ENCODE measurements at regions of chr2 and their contacts with region 1.

Region 1: GRCh38 chr2:157302492-157303099 is 23.0 kb downstream of the ERMN start:
- DNase-seq: peak; percentile 53
- ATAC-seq: peak; percentile 78
- H3K4me3 Mint-ChIP-seq: no peak overlapping the region
- H3K27ac Mint-ChIP-seq: no peak overlapping the region
- H3K4me1 Mint-ChIP-seq: peaks cover 23% of the 10 kb centered on the region
- H3K27me3 Mint-ChIP-seq: peaks cover 20% of the 10 kb centered on the region

Region 2: GRCh38 chr2:157433394-157433793 is 130.8 kb after region 1 on chr2:
- CTCF ChIA-PET with region 1: interaction called, 32 read pairs
- POLR2A ChIA-PET with region 1: interaction called, 3 read pairs
- DNase-seq: no peak
- ATAC-seq: peak; percentile 15
- H3K4me3 Mint-ChIP-seq: peak overlapping the region; percentile 94
- H3K27ac Mint-ChIP-seq: peak overlapping the region; percentile 86
- H3K4me1 Mint-ChIP-seq: peaks cover 77% of the 10 kb centered on the region
- H3K27me3 Mint-ChIP-seq: no peaks in the 10 kb centered on the region

Region 3: DNA sequence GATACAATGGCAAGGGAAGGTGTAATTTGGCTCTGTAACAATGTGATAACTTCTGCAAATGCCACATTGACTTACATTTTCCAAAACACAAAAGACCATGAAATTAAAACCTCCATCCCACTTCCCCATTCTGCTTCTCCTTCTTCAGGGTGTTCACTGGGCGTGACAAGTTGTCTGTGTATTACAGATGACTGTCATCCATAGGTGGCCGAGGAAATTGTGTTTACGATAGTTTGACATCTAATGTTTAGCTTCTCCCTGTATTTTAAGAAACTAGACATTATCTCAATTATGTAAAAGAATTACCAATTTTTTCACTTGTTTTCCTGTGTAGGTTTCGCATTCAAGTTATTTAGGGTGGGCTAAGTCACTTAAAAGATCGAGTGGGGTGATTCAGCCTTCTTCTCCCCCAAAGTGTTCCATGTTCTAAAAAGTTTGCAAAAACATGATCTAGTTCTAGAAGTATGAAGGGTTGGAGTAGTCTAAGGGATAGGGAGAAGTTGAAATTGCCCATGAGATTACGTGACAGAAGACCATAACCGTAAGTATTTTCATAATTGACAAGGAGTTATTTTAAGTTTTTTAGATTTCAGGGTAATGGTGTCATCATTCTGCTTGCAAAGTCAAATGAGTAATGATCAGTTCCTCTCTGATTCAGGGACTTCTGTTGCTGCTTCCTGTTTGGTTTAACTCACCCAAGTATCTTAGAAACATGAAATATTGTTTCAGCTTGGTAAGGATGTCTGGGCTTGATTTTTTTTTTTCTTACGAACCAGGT is 166.5 kb after region 1 on chr2:
- CTCF ChIA-PET with region 1: interaction called, 10 read pairs
- POLR2A ChIA-PET with region 1: no interaction called
- DNase-seq: no peak
- ATAC-seq: peak; percentile 76
- H3K4me3 Mint-ChIP-seq: peak overlapping the region; percentile 72
- H3K27ac Mint-ChIP-seq: peak overlapping the region; percentile 99
- H3K4me1 Mint-ChIP-seq: peaks cover 96% of the 10 kb centered on the region
- H3K27me3 Mint-ChIP-seq: no peaks in the 10 kb centered on the region

Region 4: DNA sequence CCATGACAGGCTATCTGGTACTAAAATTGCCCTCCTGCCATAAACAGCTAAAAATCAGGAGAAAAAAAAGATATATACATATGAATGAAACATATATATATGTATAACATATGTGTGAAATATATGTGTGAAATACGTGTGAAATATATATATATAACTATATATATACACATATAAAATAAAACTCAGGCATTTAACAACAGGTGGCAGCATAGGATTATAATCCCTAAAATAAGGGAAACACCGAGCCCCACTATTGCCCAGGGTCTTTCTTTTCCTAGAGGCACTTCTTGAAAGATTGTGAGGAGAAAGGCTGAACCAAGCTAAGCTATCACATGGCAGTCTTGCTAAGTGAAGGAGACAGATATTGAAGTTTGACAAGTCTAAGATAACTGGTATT is 207.1 kb after region 1 on chr2:
- CTCF ChIA-PET with region 1: interaction called, 11 read pairs
- POLR2A ChIA-PET with region 1: no interaction called
- DNase-seq: no peak
- ATAC-seq: no peak
- H3K4me3 Mint-ChIP-seq: no peak overlapping the region
- H3K27ac Mint-ChIP-seq: no peak overlapping the region
- H3K4me1 Mint-ChIP-seq: peaks cover 2% of the 10 kb centered on the region
- H3K27me3 Mint-ChIP-seq: peaks cover 20% of the 10 kb centered on the region

Region 5: GRCh38 chr2:157995117-157995516 is 692.5 kb after region 1 on chr2:
- CTCF ChIA-PET with region 1: interaction called, 10 read pairs
- POLR2A ChIA-PET with region 1: no interaction called
- DNase-seq: no peak
- ATAC-seq: no peak
- H3K4me3 Mint-ChIP-seq: no peak overlapping the region
- H3K27ac Mint-ChIP-seq: no peak overlapping the region
- H3K4me1 Mint-ChIP-seq: no peaks in the 10 kb centered on the region
- H3K27me3 Mint-ChIP-seq: peaks cover 5% of the 10 kb centered on the region